Heart left ventricle (tissue), 16 donors: ENCODE measurements at regions of chr9 and their contacts with region 1.

Region 1: DNA sequence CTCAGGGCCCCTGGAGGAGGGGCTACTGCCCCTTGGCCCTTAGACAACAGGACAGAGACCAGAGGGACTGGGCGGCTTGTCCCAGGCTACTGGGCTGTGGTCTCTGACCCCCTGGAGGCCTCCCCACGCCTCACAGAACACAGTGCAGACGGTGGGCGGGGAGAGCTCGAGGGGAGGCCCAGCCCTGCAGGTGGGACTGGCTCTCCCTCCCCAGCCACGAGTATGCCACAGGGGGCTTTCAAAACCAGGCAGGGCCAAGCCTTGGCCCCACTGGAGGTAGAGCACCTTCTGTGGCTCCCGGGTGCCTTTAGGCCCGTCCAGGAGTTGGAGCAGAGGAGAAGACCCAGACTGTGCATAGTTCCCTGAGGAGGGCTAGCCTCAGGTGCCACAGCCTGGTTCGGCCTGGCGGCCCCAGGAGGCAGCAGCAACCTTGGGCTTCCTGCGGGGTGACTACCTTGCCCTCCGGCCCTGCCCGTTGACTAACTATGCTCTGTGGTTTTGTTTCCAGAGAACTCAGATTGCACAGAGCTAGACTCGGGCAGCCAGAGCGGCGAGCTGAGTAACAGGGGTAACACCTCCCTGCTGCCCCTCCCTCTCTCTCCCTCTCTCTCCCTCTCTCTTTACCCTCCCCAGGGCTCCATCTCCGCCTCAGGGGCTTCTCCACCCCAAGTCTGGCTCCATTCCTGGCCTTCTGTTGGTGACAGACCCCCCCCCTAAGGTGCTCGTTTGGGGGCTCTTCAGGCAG is 15.5 kb downstream of the CARD19 start:
- DNase-seq: peak in 4 of 5 donors; percentile 6 to 63 (median 36)
- ATAC-seq: no peak
- H3K4me3 ChIP-seq: no peak overlapping the region
- H3K27ac ChIP-seq: peak overlapping the region in 2 of 12 donors; percentile 22 to 67
- H3K4me1 ChIP-seq: peaks cover 0 to 73% (median 5%) of the 10 kb centered on the region in 12 donors
- H3K27me3 ChIP-seq: no peaks in the 10 kb centered on the region
- CTCF ChIP-seq: no peak
- POLR2A ChIP-seq: no peak

Region 2: GRCh38 chr9:92738661-92739081 is 372.9 kb before region 1 on chr9:
- intact Hi-C with region 1: no loop called
- DNase-seq: peak in 1 of 5 donors; percentile 49
- ATAC-seq: peak; percentile 13 to 53 (median 26)
- H3K4me3 ChIP-seq: no peak overlapping the region
- H3K27ac ChIP-seq: peak overlapping the region in 11 of 12 donors; percentile 20 to 91 (median 66)
- H3K4me1 ChIP-seq: peaks cover 14 to 91% (median 77%) of the 10 kb centered on the region in 12 donors
- H3K27me3 ChIP-seq: no peaks in the 10 kb centered on the region
- CTCF ChIP-seq: no peak
- POLR2A ChIP-seq: no peak

Region 3: DNA sequence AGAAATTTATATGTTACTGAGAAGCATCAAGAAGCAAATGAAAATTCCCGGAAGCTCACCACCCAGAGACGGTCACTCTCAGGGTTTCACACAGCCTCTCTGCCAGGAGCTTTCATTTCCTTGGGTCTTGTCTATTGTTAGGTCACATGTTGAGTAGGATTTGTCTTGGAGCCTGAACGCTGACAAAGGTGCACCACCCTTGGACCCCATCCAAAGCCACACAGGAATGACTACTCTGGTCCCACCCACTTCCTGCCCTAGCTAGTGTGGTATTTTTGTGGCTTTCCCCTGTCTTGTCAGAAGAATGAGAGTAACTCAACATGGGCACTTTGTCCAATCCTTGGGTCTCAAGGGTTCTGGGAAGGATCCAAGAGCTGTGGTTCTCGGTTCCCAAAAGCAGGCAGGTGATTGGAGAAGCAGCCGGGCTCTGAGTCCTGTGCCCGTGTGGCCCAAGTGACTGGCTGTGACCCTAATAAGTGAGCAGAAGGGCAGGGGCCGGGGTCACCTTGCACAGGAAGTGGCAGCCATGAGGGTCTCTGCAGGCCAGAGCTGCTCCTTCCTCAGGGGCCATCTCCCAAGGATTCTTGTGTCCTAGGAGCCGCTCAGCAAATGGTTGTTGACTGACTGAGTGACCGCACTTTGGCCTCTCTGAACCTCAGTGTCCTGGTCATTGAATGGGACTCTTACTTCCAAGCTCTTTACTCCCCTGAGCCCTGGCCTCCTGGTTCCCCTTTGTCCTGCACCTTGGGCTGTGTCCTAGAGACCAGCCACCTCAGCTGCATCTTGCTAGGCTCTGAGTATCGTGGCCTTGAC is 157.3 kb before region 1 on chr9:
- intact Hi-C with region 1: loop called in 2 of 10 experiments (anchors 5 to 10 kb)
- DNase-seq: peak in 4 of 5 donors; percentile 71 to 84 (median 75)
- ATAC-seq: peak; percentile 48 to 94 (median 76)
- H3K4me3 ChIP-seq: peak overlapping the region in 2 of 12 donors; percentile 6 to 35
- H3K27ac ChIP-seq: peak overlapping the region; percentile 44 to 80 (median 75)
- H3K4me1 ChIP-seq: peaks cover 0 to 28% (median 8%) of the 10 kb centered on the region in 12 donors
- H3K27me3 ChIP-seq: peaks cover 0 to 53% (median 8%) of the 10 kb centered on the region in 9 donors
- CTCF ChIP-seq: no peak
- POLR2A ChIP-seq: peak in 1 of 2 donors; percentile 41

Region 4: DNA sequence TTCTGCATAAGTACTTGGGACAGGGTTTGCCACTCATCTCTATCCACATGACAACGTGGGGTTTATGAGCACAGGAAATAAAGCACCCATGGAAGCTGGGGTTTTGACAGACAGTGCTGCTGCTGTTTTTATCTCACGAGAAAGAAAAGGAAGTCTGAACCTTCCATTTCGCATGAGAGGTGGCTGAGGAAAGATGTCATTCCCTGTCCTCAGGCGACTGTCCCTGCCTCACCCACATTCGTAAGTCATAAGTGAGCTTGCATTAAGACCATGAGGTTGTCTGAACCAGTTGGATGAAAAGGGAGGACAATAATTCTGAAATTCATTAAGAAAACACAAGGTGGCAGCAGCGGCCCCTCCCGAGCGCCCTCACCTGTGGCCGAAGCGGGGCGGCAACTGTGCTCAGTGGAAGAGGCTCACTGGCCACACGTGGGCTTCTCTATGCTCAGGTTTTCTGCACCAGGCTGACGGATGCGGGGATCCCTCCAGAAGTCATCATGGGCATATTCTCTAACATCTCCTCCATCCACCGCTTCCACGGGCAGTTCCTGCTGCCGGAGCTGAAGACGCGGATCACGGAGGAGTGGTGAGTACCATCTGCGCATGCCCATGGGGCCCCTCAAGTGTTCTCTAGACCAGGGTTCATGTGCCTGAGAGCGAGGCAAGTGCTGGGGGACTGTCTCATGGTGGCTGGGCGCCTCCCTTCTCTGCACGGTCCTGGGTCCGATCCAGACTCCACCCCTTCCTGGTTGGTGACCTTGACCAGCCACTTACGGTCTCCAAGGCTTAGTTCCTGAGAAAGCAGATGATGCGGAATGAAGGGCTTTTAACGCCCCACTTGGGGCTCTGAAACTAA is 107.8 kb before region 1 on chr9:
- intact Hi-C with region 1: loop called in 2 of 10 experiments (anchors 5 to 10 kb)
- DNase-seq: peak in 3 of 5 donors; percentile 48 to 57 (median 50)
- ATAC-seq: peak in 3 of 4 donors; percentile 71 to 87 (median 79)
- H3K4me3 ChIP-seq: peak overlapping the region in 8 of 12 donors; percentile 5 to 37 (median 24)
- H3K27ac ChIP-seq: no peak overlapping the region
- H3K4me1 ChIP-seq: peaks cover 0 to 17% (median 0%) of the 10 kb centered on the region in 12 donors
- H3K27me3 ChIP-seq: no peaks in the 10 kb centered on the region
- CTCF ChIP-seq: peak; percentile 48 to 82 (median 64)
- POLR2A ChIP-seq: no peak

Region 5: GRCh38 chr9:93223260-93224180 is 112.0 kb after region 1 on chr9:
- intact Hi-C with region 1: no loop called
- DNase-seq: peak; percentile 21 to 72 (median 56)
- ATAC-seq: peak; percentile 70 to 77 (median 74)
- H3K4me3 ChIP-seq: no peak overlapping the region
- H3K27ac ChIP-seq: peak overlapping the region in 9 of 12 donors; percentile 9 to 68 (median 53)
- H3K4me1 ChIP-seq: peaks cover 0 to 88% (median 33%) of the 10 kb centered on the region in 12 donors
- H3K27me3 ChIP-seq: peaks cover 0 to 3% (median 0%) of the 10 kb centered on the region in 9 donors
- CTCF ChIP-seq: no peak
- POLR2A ChIP-seq: no peak

Region 6: DNA sequence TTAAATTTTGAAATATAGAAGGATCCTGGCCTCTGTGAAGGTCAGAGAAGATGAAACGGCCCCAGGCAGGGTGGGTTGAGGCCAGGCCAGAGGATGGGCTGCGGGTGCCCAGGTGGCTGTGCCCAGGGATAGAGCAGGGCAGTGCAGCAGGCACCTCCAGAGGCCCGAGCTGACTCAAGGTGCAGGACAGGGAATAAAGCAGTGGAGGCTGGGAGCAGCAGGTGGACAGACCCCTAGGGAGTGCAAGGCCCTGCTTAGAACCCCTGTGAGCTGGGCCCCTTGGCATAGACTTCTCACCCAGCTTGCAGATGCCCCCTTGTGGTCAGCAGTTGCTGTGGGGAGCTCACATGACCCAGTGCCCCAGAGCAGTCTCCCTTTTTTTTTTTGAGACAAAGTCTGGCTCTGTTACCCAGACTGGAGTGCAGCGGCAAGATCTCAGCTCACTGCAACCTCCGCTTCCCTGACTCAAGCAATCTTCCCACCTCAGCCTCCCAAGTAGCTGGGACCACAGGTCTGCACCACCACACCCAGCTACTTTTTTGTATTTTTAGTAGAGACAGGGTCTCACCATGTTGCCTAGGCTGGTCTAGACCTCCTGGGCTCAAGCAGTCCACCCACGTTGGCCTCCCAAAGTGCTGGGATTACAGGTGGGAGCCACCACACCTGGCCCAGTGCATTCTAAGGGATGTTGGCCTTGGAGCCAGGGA is 191.2 kb after region 1 on chr9:
- intact Hi-C with region 1: loop called in 6 of 10 experiments (anchors 2 to 5 kb)
- DNase-seq: peak in 2 of 5 donors; percentile 69 to 71
- ATAC-seq: peak in 3 of 4 donors; percentile 8 to 36 (median 32)
- H3K4me3 ChIP-seq: no peak overlapping the region
- H3K27ac ChIP-seq: no peak overlapping the region
- H3K4me1 ChIP-seq: peaks cover 0 to 47% (median 14%) of the 10 kb centered on the region in 12 donors
- H3K27me3 ChIP-seq: no peaks in the 10 kb centered on the region
- CTCF ChIP-seq: peak; percentile 35 to 62 (median 48)
- POLR2A ChIP-seq: no peak

Region 7: GRCh38 chr9:93444301-93444700 is 332.8 kb after region 1 on chr9:
- intact Hi-C with region 1: loop called in 1 of 10 experiments (anchors 10 kb)
- DNase-seq: no peak
- ATAC-seq: no peak
- H3K4me3 ChIP-seq: no peak overlapping the region
- H3K27ac ChIP-seq: no peak overlapping the region
- H3K4me1 ChIP-seq: peaks cover 0 to 6% (median under 1%) of the 10 kb centered on the region in 12 donors
- H3K27me3 ChIP-seq: no peaks in the 10 kb centered on the region
- CTCF ChIP-seq: no peak
- POLR2A ChIP-seq: no peak